ENCODE measurements at regions of chr21 and their contacts with region 1.

Region 1: GRCh38 chr21:15483138-15483780 is 246.5 kb upstream of the USP25 start:
- DNase-seq: peak; percentile 77 to 98 (median 92)

Region 2: GRCh38 chr21:14259747-14260146 is 1223.5 kb before region 1 on chr21:
- intact Hi-C with region 1: loop called (anchors 5 kb)
- DNase-seq: no peak

Region 3: GRCh38 chr21:14306151-14306907 is 1176.9 kb before region 1 on chr21:
- intact Hi-C with region 1: loop called (anchors 5 kb)
- DNase-seq: no peak

Region 4: DNA sequence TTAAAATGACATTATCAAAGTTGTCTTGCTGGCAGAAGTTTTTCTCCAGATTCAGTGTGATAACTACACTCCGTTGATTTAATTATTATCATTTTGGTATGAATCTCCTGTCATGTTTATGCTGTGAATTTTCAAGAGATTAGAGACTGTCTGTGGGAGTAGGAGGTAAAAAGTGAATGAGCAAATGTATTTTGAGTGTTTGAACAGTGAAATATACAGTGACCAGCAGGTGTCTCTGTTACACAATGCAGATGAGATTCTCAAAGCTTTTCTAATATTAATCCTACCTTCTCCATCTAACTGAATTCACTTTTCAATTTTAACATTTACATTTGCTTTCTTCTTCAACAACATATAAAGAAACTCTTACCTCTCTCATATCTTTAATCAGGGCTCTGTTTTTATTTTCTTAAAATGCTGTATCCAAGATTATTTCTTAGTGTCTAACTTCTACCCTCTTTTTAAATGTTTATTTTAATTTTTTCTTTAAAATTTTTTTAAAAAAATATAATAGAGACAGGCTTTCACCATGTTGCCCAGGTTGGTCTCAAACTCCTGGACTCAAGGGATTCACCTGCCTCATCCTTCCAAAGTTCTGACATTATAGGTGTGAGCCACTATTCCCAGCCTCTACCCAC is 1079.5 kb before region 1 on chr21:
- intact Hi-C with region 1: loop called (anchors 2 kb)
- DNase-seq: no peak

Region 5: DNA sequence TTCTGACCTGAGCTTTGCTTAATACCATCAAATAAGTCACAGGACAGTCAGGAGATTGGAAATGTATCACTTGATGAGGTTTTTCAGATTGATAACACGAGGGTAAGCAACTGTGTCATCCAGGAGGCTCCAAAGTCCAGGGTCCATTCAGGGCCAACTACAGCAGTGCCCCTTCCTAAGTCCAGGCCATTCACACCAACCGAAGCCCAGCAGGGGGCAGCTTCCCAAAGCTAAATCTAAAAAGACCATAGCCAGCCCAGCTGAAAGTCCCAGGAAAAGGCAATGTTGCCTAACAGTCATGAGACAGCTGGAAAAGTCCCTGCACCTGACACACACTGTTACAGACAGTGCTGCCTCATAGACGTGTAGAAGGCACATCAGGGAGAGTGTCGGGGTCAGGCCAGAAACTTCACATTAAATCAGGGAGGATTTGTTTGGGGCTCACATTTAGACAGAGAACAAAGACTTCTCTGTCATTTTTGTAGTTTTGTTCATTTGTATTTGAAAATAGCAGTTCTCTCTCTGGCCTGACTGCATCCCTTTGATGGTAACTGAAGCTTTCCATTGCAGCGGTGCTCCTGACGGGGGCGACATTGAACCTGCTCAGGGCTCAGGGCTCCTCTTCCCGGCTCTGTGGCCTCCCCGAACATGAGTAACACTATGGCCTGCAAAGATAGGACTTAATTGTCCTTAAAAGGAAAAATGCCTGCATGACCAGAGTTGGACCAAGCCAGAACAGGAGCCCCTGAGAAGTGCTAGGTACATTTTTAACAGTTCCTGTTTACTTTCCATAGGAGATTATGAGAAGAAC is 618.8 kb before region 1 on chr21:
- intact Hi-C with region 1: loop called (anchors 1 kb)
- DNase-seq: peak; percentile 64 to 96 (median 78)

Region 6: GRCh38 chr21:15064576-15065391 is 418.5 kb before region 1 on chr21 and contains the start of gene NRIP1:
- intact Hi-C with region 1: loop called (anchors 5 kb)
- DNase-seq: peak; percentile 80 to 98 (median 88)